Esophagus muscularis mucosa (tissue), 4 donors: ENCODE measurements at regions of chr19 and their contacts with region 1.

Region 1: DNA sequence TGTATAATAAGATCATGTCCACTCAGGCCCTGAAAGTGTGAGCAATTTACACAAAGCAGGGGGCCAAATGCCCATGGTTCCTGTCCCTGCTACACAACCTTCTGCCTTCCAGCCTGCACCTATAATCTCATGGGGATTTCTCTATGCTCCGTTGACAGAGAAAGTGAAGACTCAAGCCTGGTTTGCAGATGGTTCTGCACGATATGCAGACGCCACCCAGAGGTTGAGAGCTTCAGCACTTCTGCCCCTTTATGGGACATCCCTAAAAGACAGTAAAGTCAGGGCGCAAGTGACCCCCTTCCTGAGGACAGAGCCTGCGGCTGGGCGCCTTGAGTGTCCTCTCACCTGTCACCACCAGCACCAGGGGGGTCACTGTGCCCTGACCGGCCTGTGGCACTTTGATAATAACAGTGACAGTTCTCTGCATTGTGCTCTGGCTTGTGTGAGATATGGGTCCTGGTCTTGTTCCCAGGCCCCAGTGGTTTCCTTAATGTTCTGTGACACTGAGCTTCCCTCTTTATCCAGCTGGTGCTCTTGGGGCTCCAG is 15.1 kb downstream of the LILRA5 start:
- DNase-seq: no peak
- H3K4me3 ChIP-seq: no peak overlapping the region
- H3K27ac ChIP-seq: no peak overlapping the region
- H3K4me1 ChIP-seq: no peaks in the 10 kb centered on the region
- H3K27me3 ChIP-seq: peaks cover 0 to 43% (median 0%) of the 10 kb centered on the region in 4 donors
- CTCF ChIP-seq: no peak
- EP300 ChIP-seq: no peak
- POLR2A ChIP-seq: no peak

Region 2: DNA sequence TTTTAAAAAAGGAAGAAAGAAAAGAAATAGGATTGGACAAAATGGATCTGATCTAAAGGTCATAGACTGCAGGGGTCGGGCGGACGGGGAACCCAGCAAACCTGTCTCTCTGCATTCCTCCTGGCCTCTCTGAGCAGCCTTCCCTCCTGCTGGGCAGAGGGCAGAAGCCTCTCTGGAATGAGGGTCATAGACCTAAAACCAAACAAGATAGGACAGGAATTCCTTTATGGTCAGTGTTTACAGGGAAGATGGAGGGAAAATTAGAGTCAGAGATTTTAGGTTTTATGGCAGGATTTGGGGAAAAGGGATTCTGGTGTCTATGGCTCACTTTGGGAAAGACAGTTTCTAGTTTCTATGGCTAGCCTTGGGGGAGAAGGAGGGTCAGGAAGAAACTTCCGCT is 685.1 kb before region 1 on chr19:
- intact Hi-C with region 1: no loop called
- DNase-seq: no peak
- H3K4me3 ChIP-seq: no peak overlapping the region
- H3K27ac ChIP-seq: no peak overlapping the region
- H3K4me1 ChIP-seq: no peaks in the 10 kb centered on the region
- H3K27me3 ChIP-seq: peaks cover 0 to 9% (median 0%) of the 10 kb centered on the region in 4 donors
- CTCF ChIP-seq: no peak
- EP300 ChIP-seq: no peak
- POLR2A ChIP-seq: no peak

Region 3: GRCh38 chr19:54229146-54229545 is 68.7 kb before region 1 on chr19:
- intact Hi-C with region 1: no loop called
- DNase-seq: no peak
- H3K4me3 ChIP-seq: no peak overlapping the region
- H3K27ac ChIP-seq: no peak overlapping the region
- H3K4me1 ChIP-seq: peaks cover 0 to 9% (median 3%) of the 10 kb centered on the region in 4 donors
- H3K27me3 ChIP-seq: peaks cover 0 to 31% (median 2%) of the 10 kb centered on the region in 4 donors
- CTCF ChIP-seq: no peak
- EP300 ChIP-seq: no peak
- POLR2A ChIP-seq: no peak

Region 4: DNA sequence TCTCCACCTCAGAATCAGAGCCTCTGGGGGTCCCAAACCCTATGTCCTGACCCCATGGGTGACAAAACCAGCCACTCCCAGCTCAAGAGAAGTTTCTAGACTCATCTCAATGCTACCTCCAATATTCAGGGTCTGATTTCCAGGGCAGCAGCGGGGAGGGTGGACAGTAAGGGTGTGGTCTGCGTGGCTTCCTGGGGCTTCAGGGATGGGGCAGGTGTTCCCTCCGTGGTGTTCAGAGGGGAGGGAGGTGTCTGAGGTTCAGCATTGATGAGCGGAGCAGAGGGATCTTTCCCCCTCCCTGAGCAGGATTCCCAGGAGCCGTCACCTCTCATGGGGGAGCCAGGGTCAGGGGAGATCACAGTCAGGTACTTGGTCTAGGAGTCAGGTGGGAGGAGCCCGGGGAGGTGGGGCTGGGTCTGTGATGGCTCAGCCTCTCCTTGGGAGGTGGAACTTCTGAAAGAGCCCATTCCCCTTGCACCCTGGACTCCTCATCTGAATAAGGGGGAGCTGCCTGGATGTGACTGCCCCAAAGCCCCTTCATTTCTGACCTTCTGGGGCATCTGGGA is 278.7 kb after region 1 on chr19:
- intact Hi-C with region 1: loop called (anchors 5 kb)
- DNase-seq: peak; percentile 91
- H3K4me3 ChIP-seq: no peak overlapping the region
- H3K27ac ChIP-seq: no peak overlapping the region
- H3K4me1 ChIP-seq: no peaks in the 10 kb centered on the region
- H3K27me3 ChIP-seq: peaks cover 0 to 40% (median 0%) of the 10 kb centered on the region in 4 donors
- CTCF ChIP-seq: no peak
- EP300 ChIP-seq: no peak
- POLR2A ChIP-seq: no peak